GM12878 (cell line): ENCODE measurements at regions of chr1 and their contacts with region 1.

Region 1: GRCh38 chr1:167342846-167343245 is 122.2 kb downstream of the POU2F1 start:
- DNase-seq: no peak
- ATAC-seq: peak; percentile 93
- H3K4me3 ChIP-seq: no peak overlapping the region
- H3K27ac ChIP-seq: no peak overlapping the region
- H3K4me1 ChIP-seq: no peaks in the 10 kb centered on the region
- H3K27me3 ChIP-seq: no peaks in the 10 kb centered on the region
- CTCF ChIP-seq: peak; percentile 39 to 59 (median 45); a peak in 5 of 6 replicates
- EP300 ChIP-seq: no peak
- POLR2A ChIP-seq: no peak
- RAD21 ChIP-seq: peak; percentile 68

Region 2: GRCh38 chr1:167244244-167244643 is 98.6 kb before region 1 on chr1:
- CTCF ChIA-PET with region 1: interaction called, 12 read pairs
- POLR2A ChIA-PET with region 1: interaction called, 4 read pairs
- RAD21 ChIA-PET with region 1: no interaction called
- SMC1A ChIA-PET with region 1: interaction called, 4 read pairs
- in situ Hi-C with region 1: no loop called
- intact Hi-C with region 1: no loop called
- DNase-seq: no peak
- ATAC-seq: no peak
- H3K4me3 ChIP-seq: no peak overlapping the region
- H3K27ac ChIP-seq: no peak overlapping the region
- H3K4me1 ChIP-seq: peaks cover 12% of the 10 kb centered on the region
- H3K27me3 ChIP-seq: no peaks in the 10 kb centered on the region
- CTCF ChIP-seq: no peak
- EP300 ChIP-seq: no peak
- POLR2A ChIP-seq: no peak
- RAD21 ChIP-seq: no peak

Region 3: GRCh38 chr1:167278497-167278896 is 64.3 kb before region 1 on chr1:
- CTCF ChIA-PET with region 1: interaction called, 22 read pairs
- POLR2A ChIA-PET with region 1: interaction called, 4 read pairs
- RAD21 ChIA-PET with region 1: interaction called, 9 read pairs
- SMC1A ChIA-PET with region 1: interaction called, 9 read pairs
- in situ Hi-C with region 1: no loop called
- intact Hi-C with region 1: no loop called
- DNase-seq: no peak
- ATAC-seq: no peak
- H3K4me3 ChIP-seq: no peak overlapping the region
- H3K27ac ChIP-seq: no peak overlapping the region
- H3K4me1 ChIP-seq: peaks cover 14% of the 10 kb centered on the region; the same call in 1 of the 2 replicates
- H3K27me3 ChIP-seq: no peaks in the 10 kb centered on the region
- CTCF ChIP-seq: no peak
- EP300 ChIP-seq: no peak
- POLR2A ChIP-seq: no peak
- RAD21 ChIP-seq: no peak

Region 4: DNA sequence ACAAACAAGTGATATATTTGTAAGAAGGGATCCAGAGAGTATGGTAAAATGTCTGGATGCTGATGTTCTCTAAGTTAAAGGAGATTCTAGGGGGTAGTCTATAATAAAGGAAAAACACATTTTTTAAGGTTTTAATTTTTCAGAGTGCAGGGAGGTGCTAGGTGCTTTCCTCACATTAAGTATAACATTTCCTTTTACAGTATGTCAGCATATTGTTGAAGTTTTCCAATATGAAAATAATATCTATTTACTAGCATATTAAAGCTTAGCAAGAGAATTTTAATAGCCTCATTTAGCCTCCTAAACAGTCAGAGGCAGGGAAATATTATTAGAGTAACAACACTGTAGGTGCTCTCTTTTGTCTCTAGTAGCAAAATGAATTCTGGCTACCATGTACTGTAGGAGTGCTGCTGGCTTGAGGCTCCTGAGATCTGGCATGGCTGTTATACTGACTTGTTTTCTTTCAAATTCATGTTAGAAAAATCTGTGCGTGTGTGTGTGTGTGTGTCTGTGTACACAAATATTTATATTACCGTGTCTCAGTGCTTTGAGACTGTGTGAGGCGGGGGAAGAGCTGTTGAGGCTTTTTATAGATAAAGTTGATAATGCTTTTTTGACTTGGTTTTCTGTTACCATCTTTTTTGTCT is 51.2 kb before region 1 on chr1:
- CTCF ChIA-PET with region 1: interaction called, 11 read pairs
- POLR2A ChIA-PET with region 1: no interaction called
- RAD21 ChIA-PET with region 1: interaction called, 3 read pairs
- SMC1A ChIA-PET with region 1: interaction called, 4 read pairs
- in situ Hi-C with region 1: no loop called
- intact Hi-C with region 1: no loop called
- DNase-seq: no peak
- ATAC-seq: no peak
- H3K4me3 ChIP-seq: no peak overlapping the region
- H3K27ac ChIP-seq: no peak overlapping the region
- H3K4me1 ChIP-seq: no peaks in the 10 kb centered on the region
- H3K27me3 ChIP-seq: no peaks in the 10 kb centered on the region
- CTCF ChIP-seq: no peak
- EP300 ChIP-seq: no peak
- POLR2A ChIP-seq: no peak
- RAD21 ChIP-seq: no peak

Region 5: GRCh38 chr1:167328816-167329483 is 13.9 kb before region 1 on chr1:
- CTCF ChIA-PET with region 1: interaction called, 22 read pairs
- POLR2A ChIA-PET with region 1: interaction called, 4 read pairs
- RAD21 ChIA-PET with region 1: interaction called, 36 read pairs
- SMC1A ChIA-PET with region 1: interaction called, 10 read pairs
- in situ Hi-C with region 1: no loop called
- intact Hi-C with region 1: no loop called
- DNase-seq: peak; percentile 84
- ATAC-seq: peak; percentile 77
- H3K4me3 ChIP-seq: peak overlapping the region; percentile 72
- H3K27ac ChIP-seq: peak overlapping the region; percentile 82
- H3K4me1 ChIP-seq: peaks cover 36% of the 10 kb centered on the region
- H3K27me3 ChIP-seq: no peaks in the 10 kb centered on the region
- CTCF ChIP-seq: no peak
- EP300 ChIP-seq: peak; percentile 65 to 83; a peak in 2 of 4 replicates
- POLR2A ChIP-seq: no peak
- RAD21 ChIP-seq: no peak

Region 6: DNA sequence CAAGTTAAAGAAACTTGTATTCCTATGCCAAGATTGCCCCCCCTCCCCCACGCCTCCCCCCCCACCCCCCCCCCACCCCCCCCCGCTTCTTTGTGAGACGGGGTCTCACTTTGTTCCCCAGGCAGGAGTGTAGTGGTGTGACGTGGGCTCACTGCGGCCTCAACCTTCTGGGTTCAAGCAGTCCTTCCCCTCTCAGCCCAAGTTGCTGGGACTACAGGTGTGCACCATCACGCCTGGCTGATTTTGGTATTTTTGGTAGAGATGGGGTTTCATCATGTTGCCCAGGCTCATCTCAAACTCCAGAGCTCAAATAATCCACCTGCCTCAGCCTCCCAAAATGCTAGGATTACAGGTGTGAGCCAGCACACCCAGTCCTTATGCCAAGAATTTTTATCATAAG is 14.5 kb after region 1 on chr1:
- CTCF ChIA-PET with region 1: interaction called, 14 read pairs
- POLR2A ChIA-PET with region 1: no interaction called
- RAD21 ChIA-PET with region 1: interaction called, 3 read pairs
- SMC1A ChIA-PET with region 1: interaction called, 18 read pairs
- in situ Hi-C with region 1: no loop called
- intact Hi-C with region 1: no loop called
- DNase-seq: peak; percentile 9
- ATAC-seq: peak; percentile 74
- H3K4me3 ChIP-seq: no peak overlapping the region
- H3K27ac ChIP-seq: no peak overlapping the region
- H3K4me1 ChIP-seq: peaks cover 3% of the 10 kb centered on the region; the same call in 1 of the 2 replicates
- H3K27me3 ChIP-seq: no peaks in the 10 kb centered on the region
- CTCF ChIP-seq: no peak
- EP300 ChIP-seq: no peak
- POLR2A ChIP-seq: no peak
- RAD21 ChIP-seq: no peak

Region 7: DNA sequence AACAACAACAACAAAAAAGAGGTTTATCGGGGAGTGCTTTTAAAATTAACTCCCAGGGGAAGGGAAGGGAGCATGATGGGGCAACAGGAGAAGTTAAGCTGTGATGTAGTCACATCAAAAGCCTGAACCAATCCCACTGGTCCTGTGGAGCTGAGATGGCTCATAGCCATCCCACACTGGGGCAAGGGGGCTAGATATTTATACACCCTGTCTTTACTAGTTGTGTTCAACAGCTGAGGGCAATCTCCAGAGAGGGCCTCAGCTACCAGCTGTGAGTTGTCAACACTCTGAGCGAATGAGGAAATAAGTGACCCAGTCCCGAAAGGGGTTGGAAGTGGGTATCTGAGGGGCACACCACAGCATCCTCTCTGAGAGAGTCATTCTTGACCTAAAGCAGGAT is 241.7 kb after region 1 on chr1:
- CTCF ChIA-PET with region 1: no interaction called
- POLR2A ChIA-PET with region 1: no interaction called
- RAD21 ChIA-PET with region 1: no interaction called
- SMC1A ChIA-PET with region 1: no interaction called
- in situ Hi-C with region 1: no loop called
- intact Hi-C with region 1: no loop called
- DNase-seq: no peak
- ATAC-seq: no peak
- H3K4me3 ChIP-seq: no peak overlapping the region
- H3K27ac ChIP-seq: no peak overlapping the region
- H3K4me1 ChIP-seq: no peaks in the 10 kb centered on the region
- H3K27me3 ChIP-seq: no peaks in the 10 kb centered on the region
- CTCF ChIP-seq: no peak
- EP300 ChIP-seq: no peak
- POLR2A ChIP-seq: no peak
- RAD21 ChIP-seq: no peak